Activated T-helper 1 cell treated with anti-CD3 and anti-CD28 coated beads, Interleukin-12 subunit alpha, Interleukin-12 subunit beta, Interleukin-2, Interleukin-4 antibody, amounts not matched to agents 30 ng/mL and 10 ng/mL and 1 ng/mL, durations not matched to agents 14 hours and 24 hours and 36 hours (primary cell): ENCODE measurements at regions of chr5 and their contacts with region 1.

Region 1: DNA sequence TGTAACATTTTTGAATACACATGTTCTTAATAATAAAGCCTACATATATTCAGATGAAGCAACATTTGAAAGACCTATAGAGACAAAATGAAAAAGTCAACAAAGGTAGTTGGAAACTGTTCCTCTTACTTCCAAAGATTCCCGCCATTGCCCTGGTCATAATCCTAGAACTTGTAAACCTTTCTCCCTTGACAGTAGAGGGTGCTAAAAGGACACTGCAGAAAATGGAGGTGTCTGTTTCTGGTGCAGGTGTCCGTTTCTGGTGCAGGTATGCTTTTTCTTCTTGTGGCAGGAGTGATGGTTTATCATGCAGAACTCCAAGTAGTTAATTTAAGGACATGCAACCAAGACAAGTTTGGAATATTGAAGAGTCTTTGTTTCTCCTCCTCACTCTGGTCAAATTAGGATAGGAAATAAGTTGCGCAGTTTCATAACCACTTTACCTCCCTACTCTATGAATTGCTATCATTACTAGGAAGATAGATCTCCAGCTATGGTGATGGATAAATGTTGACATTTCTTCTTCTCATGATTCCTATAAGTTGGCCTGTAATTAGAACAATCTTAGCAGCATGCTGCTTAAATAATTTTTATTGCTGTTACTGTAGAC is 56.0 kb upstream of the FAM174A start:
- DNase-seq: no peak
- H3K4me3 Mint-ChIP-seq: no peak overlapping the region
- H3K27ac Mint-ChIP-seq: no peak overlapping the region
- H3K4me1 Mint-ChIP-seq: no peaks in the 10 kb centered on the region
- H3K27me3 Mint-ChIP-seq: peaks cover 3% of the 10 kb centered on the region

Region 2: GRCh38 chr5:101045689-101046088 is 566.5 kb after region 1 on chr5:
- intact Hi-C with region 1: loop called (anchors 5 kb)
- DNase-seq: no peak
- H3K4me3 Mint-ChIP-seq: no peak overlapping the region
- H3K27ac Mint-ChIP-seq: no peak overlapping the region
- H3K4me1 Mint-ChIP-seq: peaks cover 9% of the 10 kb centered on the region
- H3K27me3 Mint-ChIP-seq: peaks cover 3% of the 10 kb centered on the region

Region 3: GRCh38 chr5:101385276-101385675 is 906.1 kb after region 1 on chr5:
- intact Hi-C with region 1: loop called (anchors 5 kb)
- DNase-seq: no peak
- H3K4me3 Mint-ChIP-seq: no peak overlapping the region
- H3K27ac Mint-ChIP-seq: no peak overlapping the region
- H3K4me1 Mint-ChIP-seq: no peaks in the 10 kb centered on the region
- H3K27me3 Mint-ChIP-seq: no peaks in the 10 kb centered on the region